ENCODE measurements at regions of chr6 and their contacts with region 1.

Region 1: GRCh38 chr6:31139599-31139998 is 733 bp upstream of the PSORS1C2 start:
- DNase-seq: no peak
- ATAC-seq: no peak
- H3K4me3 ChIP-seq: no peak overlapping the region
- H3K27ac ChIP-seq: no peak overlapping the region
- H3K4me1 ChIP-seq: no peaks in the 10 kb centered on the region
- H3K27me3 ChIP-seq: no peaks in the 10 kb centered on the region
- CTCF ChIP-seq: no peak

Region 2: GRCh38 chr6:31197559-31198305 is 58.1 kb after region 1 on chr6:
- intact Hi-C with region 1: loop called (anchors 1 to 2 kb)
- DNase-seq: peak; percentile 89 to 94
- ATAC-seq: peak; percentile 85 to 89 (median 88)
- H3K4me3 ChIP-seq: peak overlapping the region; percentile 80
- H3K27ac ChIP-seq: peak overlapping the region; percentile 96
- H3K4me1 ChIP-seq: peaks cover 5% of the 10 kb centered on the region
- H3K27me3 ChIP-seq: no peaks in the 10 kb centered on the region
- CTCF ChIP-seq: no peak

Region 3: DNA sequence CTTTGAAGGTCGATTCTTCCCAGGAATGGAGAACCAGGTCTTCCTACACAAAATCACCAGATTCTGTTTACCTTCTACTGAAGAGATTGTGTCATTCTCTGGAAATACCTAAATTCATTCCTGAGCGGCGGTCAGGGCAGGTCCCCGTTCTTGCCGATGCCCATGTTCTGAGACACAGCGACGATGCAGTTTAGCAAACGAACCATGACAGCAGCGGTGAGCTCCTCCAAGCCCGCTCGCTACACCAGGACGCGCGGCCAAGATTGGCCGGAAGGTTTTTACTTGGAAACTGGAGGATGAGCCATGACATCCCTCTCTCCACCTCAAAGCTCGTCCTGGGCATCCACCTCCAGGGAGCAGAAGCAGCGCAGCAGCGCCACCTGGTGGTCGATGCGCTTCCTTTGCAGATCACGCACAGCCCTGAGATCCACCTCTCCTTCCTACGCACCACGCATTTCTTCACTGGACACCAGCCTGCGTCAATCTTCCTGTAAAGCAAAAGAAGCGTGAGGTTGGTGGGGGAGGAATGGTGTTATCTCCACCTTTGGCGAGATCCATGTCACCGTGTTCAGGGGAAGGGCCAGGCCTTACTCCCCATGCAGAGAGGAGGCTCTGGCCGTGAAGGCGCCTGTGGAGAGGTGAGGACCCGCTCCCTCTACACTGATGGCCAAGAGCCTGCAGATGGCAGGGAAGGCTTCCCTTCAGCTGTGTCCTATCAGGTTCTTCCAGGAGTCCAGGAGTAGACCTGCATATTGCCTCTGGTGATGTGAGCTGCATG is 227.3 kb after region 1 on chr6:
- intact Hi-C with region 1: loop called (anchors 2 kb)
- DNase-seq: peak; percentile 86 to 92
- ATAC-seq: peak; percentile 98 to 100 (median 99)
- H3K4me3 ChIP-seq: peak overlapping the region; percentile 36
- H3K27ac ChIP-seq: no peak overlapping the region
- H3K4me1 ChIP-seq: no peaks in the 10 kb centered on the region
- H3K27me3 ChIP-seq: peaks cover 0 to 16% (median 2%) of the 10 kb centered on the region in 3 donors
- CTCF ChIP-seq: peak; percentile 96